ENCODE measurements at regions of chr2 and their contacts with region 1.

Region 1: GRCh38 chr2:151409601-151410484 is at the start of gene RIF1:
- DNase-seq: peak; percentile 56 to 86 (median 70)
- ATAC-seq: peak; percentile 88
- H3K4me3 ChIP-seq: peak within 1 kb of the TSS; percentile 96
- H3K4me3 Mint-ChIP-seq: peak within 1 kb of the TSS; percentile 95
- H3K27ac ChIP-seq: peak within 1 kb of the TSS; percentile 90 to 91
- H3K27ac Mint-ChIP-seq: peak within 1 kb of the TSS; percentile 93
- H3K4me1 ChIP-seq: peaks cover 11% of the 10 kb centered on the region
- H3K4me1 Mint-ChIP-seq: peaks cover 40% of the 10 kb centered on the region
- H3K27me3 ChIP-seq: no peaks in the 10 kb centered on the region
- H3K27me3 Mint-ChIP-seq: no peaks in the 10 kb centered on the region
- CTCF ChIP-seq: peak; percentile 53
- total RNA-seq, gene RIF1: 66.9 to 69.8 TPM

Region 2: DNA sequence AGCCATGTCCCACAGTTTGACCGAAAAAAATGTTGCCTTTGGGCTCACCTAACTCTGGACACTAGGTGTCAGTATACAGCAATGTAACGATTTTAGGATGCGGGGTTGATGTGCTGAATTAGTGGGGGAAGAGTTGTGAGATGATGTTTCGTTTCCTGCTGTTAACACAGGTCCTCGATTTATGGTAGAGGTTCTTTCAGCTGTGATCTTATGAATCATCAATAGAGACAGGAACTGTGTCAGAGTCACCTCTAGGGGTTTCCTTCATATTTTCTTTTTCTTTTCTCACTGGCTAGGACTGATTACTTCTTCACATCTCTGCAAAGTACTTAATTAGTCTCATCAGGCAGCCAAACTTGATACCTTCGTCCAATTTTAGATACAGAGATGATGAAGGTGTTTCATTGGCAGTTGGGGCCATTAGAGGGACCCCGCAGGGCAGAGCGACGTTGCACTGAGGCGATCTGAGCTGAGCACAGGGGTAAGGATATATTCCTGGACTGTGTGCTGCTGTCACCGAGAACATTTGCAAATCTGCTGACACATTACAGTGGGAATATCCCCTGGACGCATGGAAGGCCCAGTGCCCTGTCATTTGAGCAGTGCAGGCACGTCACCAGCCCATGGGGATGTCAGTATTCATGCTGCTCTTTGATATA is 1812.0 kb before region 1 on chr2:
- CTCF ChIA-PET with region 1: no interaction called
- POLR2A ChIA-PET with region 1: no interaction called
- intact Hi-C with region 1: loop called in 1 of 2 experiments (anchors 5 kb)
- DNase-seq: peak; percentile 2 to 81 (median 34)
- ATAC-seq: peak; percentile 95
- H3K4me3 ChIP-seq: no peak overlapping the region
- H3K4me3 Mint-ChIP-seq: peak overlapping the region; percentile 34
- H3K27ac ChIP-seq: no peak overlapping the region
- H3K27ac Mint-ChIP-seq: no peak overlapping the region
- H3K4me1 ChIP-seq: peaks cover 12% of the 10 kb centered on the region
- H3K4me1 Mint-ChIP-seq: peaks cover 16% of the 10 kb centered on the region
- H3K27me3 ChIP-seq: peaks cover 0 to 6% of the 10 kb centered on the region in 2 experiments
- H3K27me3 Mint-ChIP-seq: peaks cover 39% of the 10 kb centered on the region
- CTCF ChIP-seq: peak; percentile 82

Region 3: DNA sequence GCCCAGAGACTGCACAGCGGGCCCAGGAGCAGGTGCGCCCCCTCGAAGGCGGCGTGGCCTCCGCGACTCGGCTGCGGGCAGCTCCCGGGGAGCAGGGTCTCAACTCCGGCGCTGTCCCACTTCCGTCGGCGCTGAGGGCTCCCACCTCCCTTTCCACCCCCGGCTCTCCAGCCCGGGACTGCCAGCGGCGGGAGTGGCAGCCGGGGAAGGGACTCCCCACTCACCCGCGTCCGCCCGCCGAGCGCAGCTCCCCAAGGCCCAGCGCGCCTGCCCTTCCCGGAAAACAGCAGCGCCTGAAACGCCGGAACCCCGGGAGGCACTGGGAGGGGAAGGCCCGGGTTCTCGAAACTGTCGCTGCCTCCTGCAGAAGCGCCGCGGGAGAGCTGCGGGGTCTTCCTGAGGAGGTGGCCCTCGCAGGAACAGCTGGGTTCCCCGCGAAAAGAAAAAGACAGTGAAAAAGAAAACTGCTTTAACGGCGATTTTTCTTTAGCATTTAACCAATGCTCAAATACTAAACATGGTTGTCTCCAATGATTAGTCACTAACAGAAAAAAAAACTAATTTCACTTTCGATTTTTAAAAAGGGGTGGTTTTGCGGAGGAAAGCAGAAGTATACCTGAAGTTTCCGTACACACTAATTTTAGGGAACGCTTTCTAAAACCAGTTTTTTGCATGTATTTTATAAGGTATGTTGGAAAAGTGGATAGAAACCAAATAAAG is 120.3 kb before region 1 on chr2 and contains the start of gene NMI:
- CTCF ChIA-PET with region 1: interaction called, 5 read pairs
- POLR2A ChIA-PET with region 1: interaction called, 14 read pairs
- intact Hi-C with region 1: loop called (anchors 1 to 2 kb)
- DNase-seq: peak; percentile 42 to 89 (median 61)
- ATAC-seq: peak; percentile 71
- H3K4me3 ChIP-seq: peak within 1 kb of the TSS; percentile 82
- H3K4me3 Mint-ChIP-seq: peak within 1 kb of the TSS; percentile 94
- H3K27ac ChIP-seq: peak within 1 kb of the TSS; percentile 82 to 97
- H3K27ac Mint-ChIP-seq: peak within 1 kb of the TSS; percentile 96
- H3K4me1 ChIP-seq: peaks cover 23% of the 10 kb centered on the region
- H3K4me1 Mint-ChIP-seq: peaks cover 56% of the 10 kb centered on the region
- H3K27me3 ChIP-seq: no peaks in the 10 kb centered on the region
- H3K27me3 Mint-ChIP-seq: no peaks in the 10 kb centered on the region
- CTCF ChIP-seq: no peak
- total RNA-seq, gene NMI: 23.5 to 24.2 TPM

Region 4: DNA sequence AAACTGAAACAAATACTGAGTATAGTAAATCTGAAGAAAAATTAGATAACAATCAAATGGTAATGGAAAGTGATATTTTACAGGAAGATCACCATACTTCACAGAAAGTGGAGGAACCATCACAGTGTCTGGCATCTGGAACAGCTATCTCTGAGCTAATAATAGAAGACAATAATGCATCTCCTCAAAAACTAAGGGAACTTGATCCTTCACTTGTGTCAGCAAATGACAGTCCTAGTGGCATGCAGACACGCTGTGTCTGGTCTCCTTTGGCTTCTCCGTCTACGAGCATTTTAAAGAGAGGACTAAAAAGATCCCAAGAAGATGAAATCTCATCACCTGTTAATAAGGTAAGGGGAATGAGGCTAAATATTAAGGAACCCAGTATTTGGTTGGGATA is 55.9 kb after region 1 on chr2:
- CTCF ChIA-PET with region 1: no interaction called
- POLR2A ChIA-PET with region 1: no interaction called
- intact Hi-C with region 1: no loop called
- DNase-seq: no peak
- ATAC-seq: no peak
- H3K4me3 ChIP-seq: no peak overlapping the region
- H3K4me3 Mint-ChIP-seq: no peak overlapping the region
- H3K27ac ChIP-seq: no peak overlapping the region
- H3K27ac Mint-ChIP-seq: no peak overlapping the region
- H3K4me1 ChIP-seq: no peaks in the 10 kb centered on the region
- H3K4me1 Mint-ChIP-seq: no peaks in the 10 kb centered on the region
- H3K27me3 ChIP-seq: no peaks in the 10 kb centered on the region
- H3K27me3 Mint-ChIP-seq: no peaks in the 10 kb centered on the region
- CTCF ChIP-seq: no peak

Region 5: DNA sequence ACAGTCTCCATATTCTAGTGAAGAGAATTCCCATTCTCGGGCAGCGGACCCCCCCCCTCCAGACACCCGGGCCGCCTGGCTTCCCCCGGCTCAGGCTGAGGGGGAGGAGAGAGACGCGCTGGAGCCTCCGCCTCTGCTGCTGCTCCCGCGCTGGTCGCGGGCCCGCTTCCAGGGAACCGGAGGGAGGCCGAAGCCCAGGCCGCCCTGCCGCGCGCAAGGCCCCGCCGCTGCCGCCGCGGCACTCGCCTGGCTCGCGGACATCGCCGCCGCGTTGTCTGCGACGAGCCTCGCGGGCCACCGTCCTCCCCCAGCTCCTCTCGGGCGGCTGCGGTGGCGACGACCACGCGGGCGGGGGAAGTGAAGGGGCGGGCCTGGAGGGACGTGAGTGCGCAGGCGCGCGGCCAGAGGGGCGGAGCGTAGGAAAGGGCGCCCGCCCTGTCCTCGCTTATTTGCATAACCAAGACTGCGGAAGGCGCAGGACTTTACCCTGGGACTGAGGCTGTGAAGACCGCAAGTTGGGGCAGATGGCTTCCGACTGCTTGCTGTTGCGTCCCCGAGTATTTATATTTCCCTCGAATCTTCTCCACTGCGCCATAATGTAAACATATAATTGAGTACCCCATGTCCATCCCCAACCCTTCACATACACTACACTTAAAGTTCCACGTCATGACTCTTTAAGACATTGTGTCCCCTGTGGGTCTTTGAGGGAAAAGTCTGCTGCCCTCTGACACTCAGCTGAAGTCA is 418.5 kb after region 1 on chr2 and contains the start of gene ARL5A:
- CTCF ChIA-PET with region 1: no interaction called
- POLR2A ChIA-PET with region 1: no interaction called
- intact Hi-C with region 1: loop called in 1 of 2 experiments (anchors 10 kb)
- DNase-seq: peak; percentile 89 to 98 (median 95)
- ATAC-seq: peak; percentile 94
- H3K4me3 ChIP-seq: peak within 1 kb of the TSS; percentile 91
- H3K4me3 Mint-ChIP-seq: peak within 1 kb of the TSS; percentile 93
- H3K27ac ChIP-seq: peak within 1 kb of the TSS; percentile 51 to 52
- H3K27ac Mint-ChIP-seq: peak within 1 kb of the TSS; percentile 95
- H3K4me1 ChIP-seq: peaks cover 18% of the 10 kb centered on the region
- H3K4me1 Mint-ChIP-seq: peaks cover 50% of the 10 kb centered on the region
- H3K27me3 ChIP-seq: no peaks in the 10 kb centered on the region
- H3K27me3 Mint-ChIP-seq: no peaks in the 10 kb centered on the region
- CTCF ChIP-seq: no peak
- total RNA-seq, gene ARL5A: 16.9 to 20.5 TPM

Measured in CD4-positive, alpha-beta T cell (primary cell).